ENCODE measurements at regions of chr2 and their contacts with region 1.

Region 1: DNA sequence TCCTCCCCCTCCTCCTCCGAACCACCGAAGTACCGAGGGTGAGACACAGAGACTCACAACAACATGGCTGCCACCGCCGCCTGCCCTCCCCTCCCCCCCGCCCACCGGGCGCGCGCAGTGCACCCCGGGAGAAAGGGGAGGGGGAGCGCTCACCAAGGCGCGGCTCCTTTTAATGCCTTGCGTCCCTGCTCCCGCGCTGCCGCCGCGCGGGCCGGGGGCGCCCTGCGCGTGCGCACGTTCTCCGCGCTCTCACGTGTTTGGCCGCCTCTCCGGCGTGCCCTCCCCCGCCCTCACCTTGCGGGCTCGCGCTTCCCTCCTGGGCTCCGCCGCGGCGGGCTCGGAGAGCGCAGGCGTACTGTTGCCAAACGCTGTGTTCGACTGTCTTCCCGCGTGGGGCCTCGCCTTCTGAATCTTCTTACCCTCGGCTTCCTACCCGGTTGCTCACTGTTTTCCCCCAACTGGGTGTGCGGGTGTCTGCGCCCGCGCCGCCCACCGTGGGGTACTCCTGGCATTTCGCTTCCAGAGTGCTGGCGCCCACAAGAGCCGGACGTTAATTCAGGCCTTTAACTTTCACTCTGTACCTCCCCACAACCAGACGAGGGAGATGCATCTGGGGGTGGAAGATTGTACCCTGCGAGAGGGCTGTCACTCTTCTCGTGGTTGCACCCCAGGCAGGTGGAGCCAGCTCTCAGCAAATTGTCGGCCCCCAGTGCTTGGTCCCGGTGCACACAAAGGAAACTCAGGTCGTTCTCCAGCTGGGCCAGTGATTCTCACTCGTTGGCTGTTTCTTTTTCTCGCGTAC is at the start of gene PUM2:
- DNase-seq: peak; percentile 97
- H3K4me3 Mint-ChIP-seq: peak within 1 kb of the TSS; percentile 92
- H3K27ac Mint-ChIP-seq: peak within 1 kb of the TSS; percentile 92
- H3K4me1 Mint-ChIP-seq: peaks cover 35% of the 10 kb centered on the region
- H3K27me3 Mint-ChIP-seq: no peaks in the 10 kb centered on the region
- total RNA-seq, gene PUM2: 125 and 131 TPM in 2 replicates

Region 2: GRCh38 chr2:19901442-19902215 is 449.3 kb before region 1 on chr2 and contains the start of gene TTC32:
- intact Hi-C with region 1: loop called (anchors 1 kb)
- DNase-seq: peak; percentile 89
- H3K4me3 Mint-ChIP-seq: peak within 1 kb of the TSS; percentile 91
- H3K27ac Mint-ChIP-seq: peak within 1 kb of the TSS; percentile 94
- H3K4me1 Mint-ChIP-seq: peaks cover 48% of the 10 kb centered on the region
- H3K27me3 Mint-ChIP-seq: peaks cover 9% of the 10 kb centered on the region
- total RNA-seq, gene TTC32: 14.0 and 15.7 TPM in 2 replicates

Region 3: GRCh38 chr2:20051532-20052228 is 299.3 kb before region 1 on chr2 and contains the start of gene LAPTM4A:
- intact Hi-C with region 1: loop called (anchors 1 kb)
- DNase-seq: peak; percentile 97
- H3K4me3 Mint-ChIP-seq: no peak within 1 kb of the TSS
- H3K27ac Mint-ChIP-seq: no peak within 1 kb of the TSS
- H3K4me1 Mint-ChIP-seq: peaks cover 26% of the 10 kb centered on the region
- H3K27me3 Mint-ChIP-seq: peaks cover 14% of the 10 kb centered on the region
- total RNA-seq, gene LAPTM4A: 25.5 and 29.1 TPM in 2 replicates

Region 4: GRCh38 chr2:20326163-20326780 is 24.7 kb before region 1 on chr2:
- intact Hi-C with region 1: loop called (anchors 1 kb)
- DNase-seq: peak; percentile 25
- H3K4me3 Mint-ChIP-seq: no peak overlapping the region
- H3K27ac Mint-ChIP-seq: peak overlapping the region; percentile 4
- H3K4me1 Mint-ChIP-seq: peaks cover 76% of the 10 kb centered on the region
- H3K27me3 Mint-ChIP-seq: no peaks in the 10 kb centered on the region

Region 5: GRCh38 chr2:20430461-20431300 is 79.7 kb after region 1 on chr2:
- intact Hi-C with region 1: loop called (anchors 2 kb)
- DNase-seq: no peak
- H3K4me3 Mint-ChIP-seq: peak overlapping the region; percentile 1
- H3K27ac Mint-ChIP-seq: peak overlapping the region; percentile 45
- H3K4me1 Mint-ChIP-seq: peaks cover 38% of the 10 kb centered on the region
- H3K27me3 Mint-ChIP-seq: no peaks in the 10 kb centered on the region

Region 6: GRCh38 chr2:20650880-20651730 is 300.2 kb after region 1 on chr2 and contains the start of gene HS1BP3:
- intact Hi-C with region 1: loop called (anchors 1 kb)
- DNase-seq: peak; percentile 91
- H3K4me3 Mint-ChIP-seq: peak within 1 kb of the TSS; percentile 88
- H3K27ac Mint-ChIP-seq: peak within 1 kb of the TSS; percentile 92
- H3K4me1 Mint-ChIP-seq: peaks cover 22% of the 10 kb centered on the region
- H3K27me3 Mint-ChIP-seq: peaks cover 6% of the 10 kb centered on the region
- total RNA-seq, gene HS1BP3: 9.1 and 10.2 TPM in 2 replicates